ENCODE measurements at regions of chr12 and their contacts with region 1.

Region 1: GRCh38 chr12:104582739-104583138 is 126.0 kb downstream of the CHST11 start:
- DNase-seq: peak; percentile 76
- ATAC-seq: peak; percentile 90
- H3K4me3 ChIP-seq: peak overlapping the region; percentile 37; the same call in 1 of the 2 replicates
- H3K27ac ChIP-seq: peak overlapping the region; percentile 47
- H3K4me1 ChIP-seq: peaks cover 69% of the 10 kb centered on the region
- H3K27me3 ChIP-seq: no peaks in the 10 kb centered on the region
- CTCF ChIP-seq: no peak
- EP300 ChIP-seq: peak; percentile 35 to 79; a peak in 3 of 4 replicates
- POLR2A ChIP-seq: no peak
- RAD21 ChIP-seq: no peak

Region 2: DNA sequence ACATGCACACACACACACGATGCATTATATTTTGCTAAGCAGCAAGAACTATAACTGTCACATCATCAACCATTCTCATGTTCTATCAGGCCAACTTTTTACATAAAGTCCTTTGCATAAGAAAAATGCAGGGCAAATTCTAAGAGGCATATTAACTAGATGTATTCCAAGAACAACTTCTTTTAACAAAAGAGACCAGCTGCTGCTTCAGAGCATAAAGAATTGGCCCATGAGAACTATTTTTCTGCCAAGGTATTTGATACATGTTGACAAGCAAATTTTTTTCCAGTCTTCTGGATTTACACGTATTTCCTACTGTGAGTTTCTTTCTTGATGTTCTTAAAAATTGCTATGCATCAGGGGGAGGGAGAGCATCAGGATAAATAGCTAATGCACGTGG is 560.0 kb before region 1 on chr12:
- CTCF ChIA-PET with region 1: no interaction called
- POLR2A ChIA-PET with region 1: no interaction called
- RAD21 ChIA-PET with region 1: no interaction called
- SMC1A ChIA-PET with region 1: no interaction called
- in situ Hi-C with region 1: no loop called
- intact Hi-C with region 1: no loop called
- DNase-seq: no peak
- ATAC-seq: no peak
- H3K4me3 ChIP-seq: no peak overlapping the region
- H3K27ac ChIP-seq: no peak overlapping the region
- H3K4me1 ChIP-seq: no peaks in the 10 kb centered on the region
- H3K27me3 ChIP-seq: no peaks in the 10 kb centered on the region
- CTCF ChIP-seq: no peak
- EP300 ChIP-seq: no peak
- POLR2A ChIP-seq: no peak
- RAD21 ChIP-seq: no peak

Region 3: DNA sequence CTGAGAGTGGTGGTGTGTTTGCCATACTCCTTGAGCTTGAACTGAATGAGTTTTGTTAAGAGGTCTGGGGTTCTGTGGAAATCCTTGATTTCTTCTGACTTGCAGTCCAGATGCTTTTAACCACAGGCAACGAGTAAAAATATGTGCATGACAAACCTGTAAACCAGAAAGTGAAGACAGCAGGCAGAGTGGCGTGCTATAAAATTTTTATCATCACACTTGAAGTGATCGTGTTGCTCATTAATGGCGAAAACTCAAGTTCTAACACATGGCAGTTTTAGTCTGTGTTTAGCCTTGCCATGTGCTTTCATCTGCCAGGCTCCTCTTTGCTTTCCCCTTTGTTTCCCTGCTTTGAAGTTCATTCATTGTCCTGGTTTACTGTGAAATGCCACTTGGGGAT is 339.2 kb before region 1 on chr12:
- CTCF ChIA-PET with region 1: no interaction called
- POLR2A ChIA-PET with region 1: no interaction called
- RAD21 ChIA-PET with region 1: no interaction called
- SMC1A ChIA-PET with region 1: no interaction called
- in situ Hi-C with region 1: no loop called
- intact Hi-C with region 1: no loop called
- DNase-seq: no peak
- ATAC-seq: no peak
- H3K4me3 ChIP-seq: no peak overlapping the region
- H3K27ac ChIP-seq: no peak overlapping the region
- H3K4me1 ChIP-seq: no peaks in the 10 kb centered on the region
- H3K27me3 ChIP-seq: no peaks in the 10 kb centered on the region
- CTCF ChIP-seq: no peak
- EP300 ChIP-seq: no peak
- POLR2A ChIP-seq: no peak
- RAD21 ChIP-seq: no peak

Region 4: GRCh38 chr12:104478396-104479122 is 104.2 kb before region 1 on chr12:
- CTCF ChIA-PET with region 1: interaction called, 7 read pairs
- POLR2A ChIA-PET with region 1: interaction called, 3 read pairs
- RAD21 ChIA-PET with region 1: interaction called, 22 read pairs
- SMC1A ChIA-PET with region 1: interaction called, 22 read pairs
- in situ Hi-C with region 1: no loop called
- intact Hi-C with region 1: loop called (anchors 5 kb)
- DNase-seq: peak; percentile 80
- ATAC-seq: peak; percentile 88
- H3K4me3 ChIP-seq: peak overlapping the region; percentile 73
- H3K27ac ChIP-seq: peak overlapping the region; percentile 94
- H3K4me1 ChIP-seq: peaks cover 37% of the 10 kb centered on the region
- H3K27me3 ChIP-seq: no peaks in the 10 kb centered on the region
- CTCF ChIP-seq: no peak
- EP300 ChIP-seq: peak; percentile 17 to 81; a peak in 2 of 4 replicates
- POLR2A ChIP-seq: peak; percentile 65
- RAD21 ChIP-seq: peak; percentile 21; the same call in 1 of the 2 replicates

Region 5: GRCh38 chr12:104520242-104520900 is 62.4 kb before region 1 on chr12:
- CTCF ChIA-PET with region 1: interaction called, 3 read pairs
- POLR2A ChIA-PET with region 1: interaction called, 3 read pairs
- RAD21 ChIA-PET with region 1: interaction called, 4 read pairs
- SMC1A ChIA-PET with region 1: interaction called, 13 read pairs
- in situ Hi-C with region 1: no loop called
- intact Hi-C with region 1: no loop called
- DNase-seq: peak; percentile 75
- ATAC-seq: peak; percentile 79
- H3K4me3 ChIP-seq: no peak overlapping the region
- H3K27ac ChIP-seq: peak overlapping the region; percentile 60
- H3K4me1 ChIP-seq: peaks cover 49% of the 10 kb centered on the region
- H3K27me3 ChIP-seq: no peaks in the 10 kb centered on the region
- CTCF ChIP-seq: no peak
- EP300 ChIP-seq: peak; percentile 31 to 50; a peak in 1 of 4 replicates
- POLR2A ChIP-seq: no peak
- RAD21 ChIP-seq: no peak

Region 6: DNA sequence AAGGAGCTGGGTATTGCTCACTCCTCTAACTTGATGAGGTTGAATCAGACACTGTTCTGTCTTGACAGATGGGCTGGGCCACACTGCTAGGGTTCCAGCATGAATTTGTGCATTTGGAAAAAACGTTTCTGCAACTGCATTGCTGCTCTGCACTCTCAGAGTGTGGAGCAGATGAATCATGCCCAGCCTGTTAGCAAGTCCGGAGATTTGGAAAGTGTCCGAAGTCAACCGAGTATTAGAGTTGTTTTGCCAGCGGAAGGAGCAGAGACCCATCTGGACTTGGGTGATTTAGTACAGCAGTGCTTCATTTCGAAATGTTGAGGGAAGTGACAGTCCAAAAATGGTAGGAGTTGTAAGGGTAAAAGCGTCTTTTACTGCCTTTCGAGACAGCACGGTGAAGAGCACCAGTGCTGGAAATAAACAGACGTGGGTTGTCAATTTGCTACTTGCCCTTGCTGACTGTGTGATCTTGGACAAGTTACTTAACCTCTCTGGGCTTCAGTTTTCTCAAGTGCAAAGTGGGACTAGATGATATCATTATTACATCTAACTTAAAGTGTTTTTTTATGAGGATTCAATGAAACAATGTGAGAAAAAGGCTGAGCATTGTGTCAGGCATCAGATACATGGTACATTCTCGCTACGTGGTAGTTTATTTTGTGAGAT is 13.5 kb after region 1 on chr12:
- CTCF ChIA-PET with region 1: interaction called, 3 read pairs
- POLR2A ChIA-PET with region 1: interaction called, 8 read pairs
- RAD21 ChIA-PET with region 1: interaction called, 11 read pairs
- SMC1A ChIA-PET with region 1: interaction called, 11 read pairs
- in situ Hi-C with region 1: no loop called
- intact Hi-C with region 1: no loop called
- DNase-seq: no peak
- ATAC-seq: no peak
- H3K4me3 ChIP-seq: no peak overlapping the region
- H3K27ac ChIP-seq: no peak overlapping the region
- H3K4me1 ChIP-seq: peaks cover 22% of the 10 kb centered on the region
- H3K27me3 ChIP-seq: no peaks in the 10 kb centered on the region
- CTCF ChIP-seq: no peak
- EP300 ChIP-seq: no peak
- POLR2A ChIP-seq: no peak
- RAD21 ChIP-seq: no peak

Region 7: GRCh38 chr12:104641862-104642261 is 59.1 kb after region 1 on chr12:
- CTCF ChIA-PET with region 1: no interaction called
- POLR2A ChIA-PET with region 1: no interaction called
- RAD21 ChIA-PET with region 1: interaction called, 15 read pairs
- SMC1A ChIA-PET with region 1: interaction called, 4 read pairs
- in situ Hi-C with region 1: no loop called
- intact Hi-C with region 1: loop called (anchors 5 kb)
- DNase-seq: peak; percentile 79
- ATAC-seq: peak; percentile 92
- H3K4me3 ChIP-seq: no peak overlapping the region
- H3K27ac ChIP-seq: peak overlapping the region; percentile 78
- H3K4me1 ChIP-seq: peaks cover 43% of the 10 kb centered on the region
- H3K27me3 ChIP-seq: no peaks in the 10 kb centered on the region
- CTCF ChIP-seq: peak; percentile 37 to 65 (median 50); a peak in 5 of 6 replicates
- EP300 ChIP-seq: peak; percentile 99
- POLR2A ChIP-seq: no peak
- RAD21 ChIP-seq: peak; percentile 65

Region 8: DNA sequence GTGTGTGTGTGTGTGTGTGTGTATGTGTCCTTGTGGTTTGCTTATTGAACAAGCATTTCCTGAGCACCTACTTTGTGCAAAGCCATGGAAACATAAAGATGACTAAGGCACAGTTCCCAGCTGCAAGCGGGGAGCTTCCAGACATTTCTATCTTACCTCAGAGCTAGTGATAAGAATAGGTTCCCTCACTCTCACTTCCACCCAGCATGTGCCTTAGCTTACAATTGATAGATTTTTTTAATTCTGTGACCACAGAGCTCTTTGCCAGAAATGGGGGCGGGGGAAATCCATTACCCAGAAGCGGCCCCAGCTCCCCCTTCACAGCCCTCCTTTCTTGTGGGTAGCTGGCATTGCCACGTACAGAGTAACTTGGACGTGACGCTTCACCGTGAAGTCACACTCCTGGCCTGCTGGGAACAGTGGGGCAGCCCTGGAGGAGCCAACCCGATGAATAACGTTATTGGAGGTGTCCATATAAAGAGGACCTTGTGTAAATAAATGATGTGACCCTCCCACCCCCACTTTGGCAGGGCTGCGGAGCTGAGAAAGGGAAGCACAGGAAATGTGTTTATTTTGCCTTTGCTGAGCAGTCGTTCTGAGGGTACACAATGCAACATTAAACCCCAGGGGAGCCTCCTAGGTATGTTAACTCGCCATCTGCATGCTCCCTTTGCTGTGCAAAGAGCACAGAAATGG is 112.9 kb after region 1 on chr12:
- CTCF ChIA-PET with region 1: interaction called, 3 read pairs
- POLR2A ChIA-PET with region 1: interaction called, 4 read pairs
- RAD21 ChIA-PET with region 1: interaction called, 10 read pairs
- SMC1A ChIA-PET with region 1: interaction called, 5 read pairs
- in situ Hi-C with region 1: no loop called
- intact Hi-C with region 1: no loop called
- DNase-seq: peak; percentile 73
- ATAC-seq: peak; percentile 75
- H3K4me3 ChIP-seq: no peak overlapping the region
- H3K27ac ChIP-seq: peak overlapping the region; percentile 58
- H3K4me1 ChIP-seq: peaks cover 42% of the 10 kb centered on the region
- H3K27me3 ChIP-seq: no peaks in the 10 kb centered on the region
- CTCF ChIP-seq: no peak
- EP300 ChIP-seq: peak; percentile 76 to 78; a peak in 3 of 4 replicates
- POLR2A ChIP-seq: no peak
- RAD21 ChIP-seq: no peak

Region 9: GRCh38 chr12:104966677-104967076 is 383.9 kb after region 1 on chr12:
- CTCF ChIA-PET with region 1: no interaction called
- POLR2A ChIA-PET with region 1: no interaction called
- RAD21 ChIA-PET with region 1: no interaction called
- SMC1A ChIA-PET with region 1: no interaction called
- in situ Hi-C with region 1: no loop called
- intact Hi-C with region 1: no loop called
- DNase-seq: peak; percentile 68
- ATAC-seq: peak; percentile 95
- H3K4me3 ChIP-seq: no peak overlapping the region
- H3K27ac ChIP-seq: 0 out of 2 replicates have a peak overlapping the region, but pooled peaks have one; percentile 1
- H3K4me1 ChIP-seq: peaks cover 24% of the 10 kb centered on the region
- H3K27me3 ChIP-seq: no peaks in the 10 kb centered on the region
- CTCF ChIP-seq: no peak
- EP300 ChIP-seq: peak in 1 of 2 experiments; percentile 29; a peak in 2 of 4 replicates
- POLR2A ChIP-seq: no peak
- RAD21 ChIP-seq: no peak

Measured in GM12878 (cell line).